Colonic mucosa (tissue), 4 donors: ENCODE measurements at regions of chr2 and their contacts with region 1.

Region 1: DNA sequence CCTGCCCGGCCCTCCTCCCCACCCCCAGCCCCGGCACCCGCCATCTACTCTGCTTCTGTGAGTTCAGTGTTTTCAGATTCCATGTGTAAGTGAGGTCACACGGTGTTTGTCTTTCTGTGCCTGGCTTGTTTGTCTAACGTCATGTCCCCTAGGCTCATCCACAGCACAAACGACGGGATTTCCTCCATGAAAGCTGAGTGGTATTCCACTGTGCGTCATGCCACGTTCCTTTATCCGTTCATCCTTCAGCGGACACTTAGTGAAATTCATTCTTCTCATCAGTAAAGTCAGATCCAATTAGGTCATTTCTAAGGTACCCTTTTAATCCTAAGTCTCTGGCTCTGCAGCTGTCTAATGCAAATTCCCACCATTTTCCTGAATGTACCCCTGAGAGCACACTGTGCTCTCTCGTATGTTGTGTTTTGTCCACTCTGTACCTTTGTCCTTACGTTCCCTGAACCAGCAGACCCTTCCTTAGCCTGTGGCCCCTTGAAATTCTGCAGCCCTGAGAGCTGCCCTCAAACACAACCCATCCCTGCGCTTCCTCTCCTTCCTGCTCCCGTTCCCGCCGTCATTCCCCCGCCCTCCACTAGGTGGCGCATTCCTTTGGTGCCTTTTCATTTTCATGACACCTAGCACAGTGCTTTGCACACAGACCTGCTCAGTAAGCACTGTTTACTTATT is 44.1 kb downstream of the TRAPPC12 start:
- DNase-seq: peak; percentile 86
- H3K4me3 ChIP-seq: no peak overlapping the region
- H3K27ac ChIP-seq: no peak overlapping the region
- H3K4me1 ChIP-seq: no peaks in the 10 kb centered on the region
- H3K27me3 ChIP-seq: no peaks in the 10 kb centered on the region
- CTCF ChIP-seq: peak; percentile 99

Region 2: DNA sequence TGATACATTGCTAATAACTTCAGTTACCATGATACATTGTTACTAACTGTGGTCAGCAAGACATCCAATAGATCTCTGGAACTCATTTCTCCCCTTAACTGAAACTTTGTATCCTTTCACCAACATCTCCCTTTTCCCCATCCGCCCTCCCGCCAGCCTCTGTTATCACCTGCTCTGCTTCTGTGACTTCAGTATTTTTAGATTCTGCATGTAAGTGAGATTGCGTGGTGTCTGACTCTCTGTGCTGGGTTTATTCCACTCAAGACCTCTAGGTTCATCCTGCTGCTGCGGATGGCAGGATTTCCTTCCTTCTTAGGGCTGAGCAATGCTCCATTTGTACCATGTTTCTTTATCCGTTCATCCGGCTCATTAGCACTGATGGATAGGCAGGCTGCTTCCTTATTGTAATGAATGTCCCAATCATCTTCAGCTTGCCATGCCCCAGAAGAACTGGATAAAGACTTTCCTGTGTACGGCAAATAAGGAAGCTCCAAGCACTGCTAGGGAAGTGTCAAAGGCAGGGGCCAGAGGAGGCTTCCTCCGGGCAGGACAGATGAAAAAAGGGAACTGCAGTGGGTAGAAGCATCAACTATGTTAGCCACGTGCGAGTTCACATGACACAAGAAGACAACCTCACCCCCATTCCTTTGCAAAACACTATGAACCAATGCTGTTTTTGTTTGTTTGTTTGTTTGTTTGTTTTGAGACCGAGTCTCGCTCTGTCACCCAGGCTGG is 159.5 kb before region 1 on chr2:
- intact Hi-C with region 1: no loop called
- DNase-seq: no peak
- H3K4me3 ChIP-seq: no peak overlapping the region
- H3K27ac ChIP-seq: no peak overlapping the region
- H3K4me1 ChIP-seq: no peaks in the 10 kb centered on the region
- H3K27me3 ChIP-seq: no peaks in the 10 kb centered on the region
- CTCF ChIP-seq: no peak

Region 3: GRCh38 chr2:3461801-3462492 is 38.3 kb after region 1 on chr2:
- intact Hi-C with region 1: loop called (anchors 5 kb)
- DNase-seq: no peak
- H3K4me3 ChIP-seq: no peak overlapping the region
- H3K27ac ChIP-seq: no peak overlapping the region
- H3K4me1 ChIP-seq: no peaks in the 10 kb centered on the region
- H3K27me3 ChIP-seq: no peaks in the 10 kb centered on the region
- CTCF ChIP-seq: peak; percentile 95

Region 4: DNA sequence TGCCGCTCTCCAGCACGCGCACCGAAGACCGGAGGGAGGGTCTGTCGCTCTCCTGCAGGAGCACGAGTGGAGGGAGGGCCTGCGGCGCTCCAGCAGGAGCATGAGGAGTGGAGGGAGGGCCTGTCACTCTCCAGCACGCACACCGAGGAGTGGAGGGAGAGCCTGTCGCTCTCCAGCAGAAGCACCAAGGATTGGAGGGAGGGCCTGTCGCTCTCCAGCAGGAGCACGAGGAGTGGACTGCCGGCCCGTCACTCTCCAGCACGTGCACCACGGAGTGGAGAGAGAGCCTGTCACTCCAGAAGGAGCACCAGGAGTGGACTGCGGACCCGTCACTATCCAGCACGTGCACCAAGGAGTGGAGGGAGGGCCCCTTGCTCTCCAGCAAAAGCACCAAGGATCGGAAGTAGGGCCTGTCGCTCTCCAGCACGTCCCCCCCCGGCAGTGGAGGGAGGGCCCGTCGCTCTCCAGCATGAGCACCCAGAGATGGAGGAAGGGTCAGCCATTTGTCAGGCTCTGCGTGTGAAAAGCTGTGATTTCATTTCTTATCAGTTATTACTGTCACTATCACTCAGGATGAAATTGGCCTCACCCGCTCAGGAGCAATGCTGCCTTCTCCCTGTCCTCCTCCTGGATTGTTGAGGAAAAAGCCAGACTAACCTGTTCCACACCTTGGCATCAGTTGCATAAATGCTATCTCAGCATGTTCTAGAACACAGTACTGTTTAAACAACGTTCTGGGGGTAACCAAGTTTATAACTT is 59.8 kb after region 1 on chr2:
- intact Hi-C with region 1: no loop called
- DNase-seq: no peak
- H3K4me3 ChIP-seq: no peak overlapping the region
- H3K27ac ChIP-seq: no peak overlapping the region
- H3K4me1 ChIP-seq: no peaks in the 10 kb centered on the region
- H3K27me3 ChIP-seq: no peaks in the 10 kb centered on the region
- CTCF ChIP-seq: no peak

Region 5: GRCh38 chr2:3651691-3652648 is 228.3 kb after region 1 on chr2:
- intact Hi-C with region 1: loop called (anchors 10 kb)
- DNase-seq: peak; percentile 54
- H3K4me3 ChIP-seq: peak overlapping the region; percentile 31
- H3K27ac ChIP-seq: no peak overlapping the region
- H3K4me1 ChIP-seq: no peaks in the 10 kb centered on the region
- H3K27me3 ChIP-seq: no peaks in the 10 kb centered on the region
- CTCF ChIP-seq: no peak